Endothelial cell of umbilical vein (primary cell): ENCODE measurements at regions of chr1 and their contacts with region 1.

Region 1: GRCh38 chr1:205354259-205354904 is 2.3 kb downstream of the KLHDC8A start:
- DNase-seq: peak; percentile 63
- H3K4me3 ChIP-seq: no peak overlapping the region
- H3K27ac ChIP-seq: no peak overlapping the region
- H3K4me1 ChIP-seq: no peaks in the 10 kb centered on the region
- H3K27me3 ChIP-seq: peaks cover 4 to 30% of the 10 kb centered on the region in 2 experiments
- CTCF ChIP-seq: peak; percentile 66 to 69
- POLR2A ChIP-seq: no peak

Region 2: GRCh38 chr1:205335643-205336091 is 18.7 kb before region 1 on chr1:
- CTCF ChIA-PET with region 1: interaction called, 55 read pairs
- POLR2A ChIA-PET with region 1: no interaction called
- dilution Hi-C with region 1: no loop called
- intact Hi-C with region 1: no loop called
- DNase-seq: peak; percentile 85
- H3K4me3 ChIP-seq: no peak overlapping the region
- H3K27ac ChIP-seq: no peak overlapping the region
- H3K4me1 ChIP-seq: no peaks in the 10 kb centered on the region
- H3K27me3 ChIP-seq: peaks cover 8 to 14% of the 10 kb centered on the region in 2 experiments
- CTCF ChIP-seq: peak; percentile 97
- POLR2A ChIP-seq: no peak

Region 3: GRCh38 chr1:205365945-205366463 is 11.6 kb after region 1 on chr1:
- CTCF ChIA-PET with region 1: interaction called, 25 read pairs
- POLR2A ChIA-PET with region 1: no interaction called
- dilution Hi-C with region 1: no loop called
- intact Hi-C with region 1: no loop called
- DNase-seq: no peak
- H3K4me3 ChIP-seq: no peak overlapping the region
- H3K27ac ChIP-seq: no peak overlapping the region
- H3K4me1 ChIP-seq: no peaks in the 10 kb centered on the region
- H3K27me3 ChIP-seq: peaks cover 15 to 33% of the 10 kb centered on the region in 2 experiments
- CTCF ChIP-seq: no peak
- POLR2A ChIP-seq: no peak

Region 4: GRCh38 chr1:205396967-205397616 is 42.7 kb after region 1 on chr1:
- CTCF ChIA-PET with region 1: interaction called, 19 read pairs
- POLR2A ChIA-PET with region 1: no interaction called
- dilution Hi-C with region 1: no loop called
- intact Hi-C with region 1: no loop called
- DNase-seq: peak; percentile 35
- H3K4me3 ChIP-seq: no peak overlapping the region
- H3K27ac ChIP-seq: no peak overlapping the region
- H3K4me1 ChIP-seq: no peaks in the 10 kb centered on the region
- H3K27me3 ChIP-seq: peaks cover 8 to 19% of the 10 kb centered on the region in 2 experiments
- CTCF ChIP-seq: peak; percentile 52 to 54
- POLR2A ChIP-seq: no peak

Region 5: GRCh38 chr1:205430696-205431305 is 76.4 kb after region 1 on chr1:
- CTCF ChIA-PET with region 1: interaction called, 16 read pairs
- POLR2A ChIA-PET with region 1: no interaction called
- dilution Hi-C with region 1: no loop called
- intact Hi-C with region 1: no loop called
- DNase-seq: peak; percentile 59
- H3K4me3 ChIP-seq: peak overlapping the region; percentile 18 to 51 (median 34)
- H3K27ac ChIP-seq: no peak overlapping the region
- H3K4me1 ChIP-seq: no peaks in the 10 kb centered on the region
- H3K27me3 ChIP-seq: peaks cover 12 to 19% of the 10 kb centered on the region in 2 experiments
- CTCF ChIP-seq: peak; percentile 67 to 79
- POLR2A ChIP-seq: no peak